ENCODE measurements at regions of chr11 and their contacts with region 1.

Region 1: DNA sequence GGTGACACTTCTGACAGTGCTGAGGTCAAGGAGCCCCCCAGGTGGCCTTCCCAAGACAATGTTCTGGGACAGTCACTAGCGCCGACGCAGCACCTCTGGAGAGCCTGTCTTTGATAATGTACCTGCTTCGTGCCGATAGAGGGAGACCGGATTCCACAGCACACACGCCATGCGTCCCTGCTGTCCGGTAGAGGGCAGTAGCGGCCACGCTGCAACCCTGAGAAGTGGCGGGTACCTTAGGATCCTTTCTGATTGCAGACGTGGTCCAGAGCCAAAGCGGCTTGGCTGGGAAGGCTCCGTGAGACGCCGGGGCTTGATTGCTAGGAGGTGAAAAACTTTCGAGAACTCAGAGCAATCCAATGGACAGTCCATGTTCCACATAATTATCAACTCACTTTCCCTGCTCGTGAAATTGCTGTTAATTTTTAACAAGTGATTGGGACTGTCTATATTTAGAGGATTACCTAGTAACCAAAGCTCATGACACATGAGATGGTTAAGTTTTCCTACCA is 11.4 kb upstream of the BARX2 start:
- DNase-seq: peak; percentile 80 to 88
- H3K4me3 ChIP-seq: no peak overlapping the region
- H3K27ac ChIP-seq: no peak overlapping the region
- H3K4me1 ChIP-seq: no peaks in the 10 kb centered on the region
- H3K27me3 ChIP-seq: no peaks in the 10 kb centered on the region
- CTCF ChIP-seq: peak; percentile 82 to 99 (median 96)
- POLR2A ChIP-seq: no peak

Region 2: DNA sequence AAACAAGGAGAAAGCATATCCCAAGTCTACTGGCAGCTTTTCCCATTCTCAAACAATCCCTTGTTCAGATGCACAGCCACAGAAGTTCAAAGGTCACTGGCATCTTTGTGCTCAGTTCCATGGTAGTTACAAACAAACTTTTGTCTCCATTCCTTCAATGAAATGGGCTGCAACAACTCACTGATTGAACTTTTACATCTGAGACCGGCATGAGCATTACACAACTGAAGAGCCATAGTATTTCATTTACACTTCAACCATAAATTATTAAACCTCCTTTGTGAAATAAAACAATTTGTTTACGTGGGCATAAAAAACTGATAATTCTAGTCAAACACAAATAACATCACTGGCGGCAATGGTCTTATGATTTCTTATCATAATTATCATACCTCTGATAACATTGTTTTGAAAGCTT is 104.3 kb before region 1 on chr11:
- intact Hi-C with region 1: no loop called
- DNase-seq: no peak
- H3K4me3 ChIP-seq: no peak overlapping the region
- H3K27ac ChIP-seq: no peak overlapping the region
- H3K4me1 ChIP-seq: peaks cover 3 to 6% of the 10 kb centered on the region in 2 donors
- H3K27me3 ChIP-seq: no peaks in the 10 kb centered on the region
- CTCF ChIP-seq: no peak
- POLR2A ChIP-seq: no peak

Region 3: DNA sequence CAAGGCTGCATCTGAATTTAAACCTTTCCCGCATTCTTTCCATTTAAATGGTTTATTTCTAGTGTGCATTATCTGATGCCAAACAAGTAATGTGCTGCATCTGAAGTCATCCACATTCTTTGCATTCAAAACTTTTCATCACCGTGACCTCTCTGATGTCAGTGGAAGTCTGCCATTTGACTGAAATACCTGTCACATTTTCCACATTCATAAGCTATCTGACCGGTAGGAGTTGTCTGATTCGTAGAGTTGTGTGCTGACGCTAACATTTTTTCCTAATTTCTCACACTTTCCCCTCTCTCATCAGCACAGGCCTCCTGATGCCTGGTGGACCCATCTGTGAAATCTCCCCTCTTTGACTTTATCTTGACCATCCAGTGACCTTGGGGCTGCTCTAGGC is 68.5 kb before region 1 on chr11:
- intact Hi-C with region 1: no loop called
- DNase-seq: no peak
- H3K4me3 ChIP-seq: no peak overlapping the region
- H3K27ac ChIP-seq: no peak overlapping the region
- H3K4me1 ChIP-seq: no peaks in the 10 kb centered on the region
- H3K27me3 ChIP-seq: no peaks in the 10 kb centered on the region
- CTCF ChIP-seq: no peak
- POLR2A ChIP-seq: no peak

Region 4: DNA sequence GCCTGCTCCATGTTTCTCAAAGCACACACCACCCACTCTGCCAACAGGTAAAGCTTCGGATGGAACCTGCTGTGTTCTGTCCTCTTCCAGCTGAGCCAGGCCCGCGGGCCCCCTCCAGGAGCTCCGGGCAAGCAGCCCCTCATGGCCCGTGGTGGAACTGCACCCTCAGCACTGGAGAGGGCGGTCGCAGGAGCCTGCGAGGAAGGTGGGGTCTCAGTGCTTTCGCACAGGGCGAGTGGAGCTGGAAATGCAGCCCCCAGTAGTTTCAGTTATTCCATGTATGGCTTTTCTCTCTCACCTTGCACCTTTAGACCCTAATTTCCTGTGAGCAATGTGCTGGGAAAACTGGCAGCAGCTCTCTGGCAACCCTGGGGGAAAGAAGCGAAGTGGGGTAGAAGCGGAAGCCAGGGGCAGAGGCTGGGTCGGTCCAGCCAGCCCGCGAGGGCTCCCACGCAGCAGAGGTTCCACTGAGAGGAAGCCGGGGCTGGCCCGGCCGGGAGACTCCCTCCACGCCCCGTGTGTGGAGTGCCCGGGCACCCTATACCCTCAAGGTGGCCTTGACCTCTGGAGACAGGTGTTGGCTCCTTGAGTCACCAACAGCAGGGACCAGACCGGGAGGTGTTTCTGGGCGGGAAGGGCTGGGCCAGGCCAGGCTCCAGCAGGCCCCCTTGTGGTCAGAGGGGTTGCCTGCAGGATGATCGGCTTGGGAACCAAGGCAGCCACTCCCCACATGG is 331.5 kb after region 1 on chr11:
- intact Hi-C with region 1: loop called (anchors 10 kb)
- DNase-seq: peak; percentile 72 to 73
- H3K4me3 ChIP-seq: peak overlapping the region in 1 of 3 donors; percentile 12
- H3K27ac ChIP-seq: no peak overlapping the region
- H3K4me1 ChIP-seq: no peaks in the 10 kb centered on the region
- H3K27me3 ChIP-seq: no peaks in the 10 kb centered on the region
- CTCF ChIP-seq: peak; percentile 35 to 85 (median 64)
- POLR2A ChIP-seq: no peak

Region 5: GRCh38 chr11:129743111-129743815 is 379.1 kb after region 1 on chr11:
- intact Hi-C with region 1: loop called (anchors 10 kb)
- DNase-seq: no peak
- H3K4me3 ChIP-seq: no peak overlapping the region
- H3K27ac ChIP-seq: no peak overlapping the region
- H3K4me1 ChIP-seq: peaks cover 0 to 4% of the 10 kb centered on the region in 2 donors
- H3K27me3 ChIP-seq: no peaks in the 10 kb centered on the region
- CTCF ChIP-seq: no peak
- POLR2A ChIP-seq: no peak

Measured in thyroid gland (tissue), 4 donors.